B cell (primary cell): ENCODE measurements at regions of chr18 and their contacts with region 1.

Region 1: GRCh38 chr18:32092422-32093101 is 888 bp downstream of the RNF138 start:
- DNase-seq: peak; percentile 98
- ATAC-seq: peak; percentile 90
- H3K4me3 ChIP-seq: peak overlapping the region; percentile 63 to 98 (median 90)
- H3K4me3 Mint-ChIP-seq: peak overlapping the region; percentile 93
- H3K27ac ChIP-seq: peak overlapping the region; percentile 100
- H3K27ac Mint-ChIP-seq: peak overlapping the region; percentile 98
- H3K4me1 ChIP-seq: peaks cover 35 to 40% of the 10 kb centered on the region in 2 donors
- H3K4me1 Mint-ChIP-seq: peaks cover 43% of the 10 kb centered on the region
- H3K27me3 ChIP-seq: no peaks in the 10 kb centered on the region
- H3K27me3 Mint-ChIP-seq: no peaks in the 10 kb centered on the region
- CTCF ChIP-seq: no peak

Region 2: GRCh38 chr18:31819106-31819924 is 273.2 kb before region 1 on chr18:
- CTCF ChIA-PET with region 1: no interaction called
- POLR2A ChIA-PET with region 1: no interaction called
- intact Hi-C with region 1: no loop called
- DNase-seq: peak; percentile 42
- ATAC-seq: no peak
- H3K4me3 ChIP-seq: no peak overlapping the region
- H3K4me3 Mint-ChIP-seq: no peak overlapping the region
- H3K27ac ChIP-seq: no peak overlapping the region
- H3K27ac Mint-ChIP-seq: no peak overlapping the region
- H3K4me1 ChIP-seq: no peaks in the 10 kb centered on the region
- H3K4me1 Mint-ChIP-seq: no peaks in the 10 kb centered on the region
- H3K27me3 ChIP-seq: no peaks in the 10 kb centered on the region
- H3K27me3 Mint-ChIP-seq: peaks cover 6% of the 10 kb centered on the region
- CTCF ChIP-seq: peak; percentile 83

Region 3: DNA sequence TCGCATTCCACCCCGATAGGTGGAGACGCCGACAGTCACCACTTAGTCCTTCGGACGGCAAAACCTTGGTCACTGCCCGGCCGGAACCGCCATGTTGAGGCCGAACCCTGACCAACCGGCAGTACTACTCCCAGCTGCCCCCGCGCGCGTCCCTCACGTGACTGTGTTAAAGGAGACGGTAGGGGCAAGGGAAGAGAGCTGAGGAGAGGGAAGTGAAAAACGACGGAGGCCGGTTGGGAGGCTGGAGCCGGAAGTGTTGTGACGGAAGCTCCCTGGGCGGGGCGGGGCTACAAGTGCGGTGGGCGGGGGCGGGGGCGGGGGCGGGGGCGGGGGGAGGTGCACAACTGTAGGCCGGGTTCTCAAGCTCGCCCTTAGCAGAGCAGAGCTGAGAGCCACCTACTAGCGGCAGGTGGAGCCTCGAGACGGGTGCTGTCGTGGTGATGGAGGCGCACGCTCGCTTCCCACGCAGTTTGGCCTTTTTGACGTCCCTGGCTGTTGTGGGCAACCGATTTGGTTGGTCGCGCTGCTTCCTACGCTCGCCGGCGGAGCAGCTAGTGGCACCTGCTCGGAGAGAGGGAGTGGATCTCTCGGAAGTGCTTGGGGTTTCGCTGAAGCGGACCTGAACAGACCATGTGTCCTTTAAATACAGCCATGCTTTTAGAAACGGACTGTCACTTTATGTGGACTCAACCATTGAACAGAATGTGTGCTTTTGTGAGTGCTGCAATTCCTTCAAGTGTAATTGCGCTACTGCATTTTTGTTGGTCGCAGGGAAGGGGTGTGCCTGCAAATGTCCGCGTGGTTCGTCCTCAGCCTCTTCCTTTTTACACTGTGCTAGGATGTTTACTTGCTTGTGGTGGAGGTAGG is 149.3 kb before region 1 on chr18 and contains the start of gene TRAPPC8:
- CTCF ChIA-PET with region 1: interaction called, 4 read pairs
- POLR2A ChIA-PET with region 1: interaction called, 42 read pairs
- intact Hi-C with region 1: loop called (anchors 1 kb)
- DNase-seq: peak; percentile 98
- ATAC-seq: peak; percentile 80
- H3K4me3 ChIP-seq: peak within 1 kb of the TSS; percentile 83 to 97 (median 94)
- H3K4me3 Mint-ChIP-seq: peak within 1 kb of the TSS; percentile 100
- H3K27ac ChIP-seq: peak within 1 kb of the TSS; percentile 98
- H3K27ac Mint-ChIP-seq: peak within 1 kb of the TSS; percentile 100
- H3K4me1 ChIP-seq: peaks cover 24 to 31% of the 10 kb centered on the region in 2 donors
- H3K4me1 Mint-ChIP-seq: peaks cover 39% of the 10 kb centered on the region
- H3K27me3 ChIP-seq: no peaks in the 10 kb centered on the region
- H3K27me3 Mint-ChIP-seq: no peaks in the 10 kb centered on the region
- CTCF ChIP-seq: no peak
- total RNA-seq, gene TRAPPC8: 89.8 and 95.5 TPM in 2 replicates

Region 4: DNA sequence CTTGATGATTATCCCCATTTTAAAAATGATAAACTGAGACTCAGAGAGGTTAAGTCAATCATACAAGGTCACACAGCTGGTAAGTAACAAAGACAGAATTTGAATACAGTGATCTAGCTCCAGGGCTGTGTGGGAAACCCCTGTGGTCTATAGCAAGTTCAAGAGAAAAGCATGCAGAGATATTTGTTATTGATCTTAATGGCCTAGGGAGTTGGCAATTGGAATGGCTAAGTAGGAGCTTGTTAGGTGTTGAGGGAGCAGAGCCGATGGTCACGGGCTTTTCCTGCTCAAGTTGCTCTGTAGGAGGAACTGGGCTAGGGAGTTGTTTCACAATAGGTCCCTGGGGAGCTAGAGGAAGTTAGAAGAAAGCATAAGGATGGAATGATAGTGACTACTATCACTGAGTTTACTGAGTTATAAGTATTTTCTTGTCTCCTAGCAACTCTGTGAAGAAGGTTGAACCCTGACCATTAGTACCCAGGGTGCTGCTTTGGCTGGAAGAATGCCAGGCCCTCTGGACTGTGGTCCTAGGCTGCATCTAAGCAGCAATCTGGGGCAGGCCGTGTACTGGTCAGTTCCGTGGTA is 44.0 kb before region 1 on chr18:
- CTCF ChIA-PET with region 1: no interaction called
- POLR2A ChIA-PET with region 1: no interaction called
- intact Hi-C with region 1: loop called (anchors 5 kb)
- DNase-seq: peak; percentile 53
- ATAC-seq: peak; percentile 33
- H3K4me3 ChIP-seq: no peak overlapping the region
- H3K4me3 Mint-ChIP-seq: peak overlapping the region; percentile 27
- H3K27ac ChIP-seq: peak overlapping the region; percentile 77 to 81
- H3K27ac Mint-ChIP-seq: peak overlapping the region; percentile 71
- H3K4me1 ChIP-seq: peaks cover 19% of the 10 kb centered on the region in 2 donors
- H3K4me1 Mint-ChIP-seq: peaks cover 25% of the 10 kb centered on the region
- H3K27me3 ChIP-seq: no peaks in the 10 kb centered on the region
- H3K27me3 Mint-ChIP-seq: no peaks in the 10 kb centered on the region
- CTCF ChIP-seq: no peak

Region 5: GRCh38 chr18:32081881-32082280 is 10.7 kb before region 1 on chr18:
- CTCF ChIA-PET with region 1: no interaction called
- POLR2A ChIA-PET with region 1: no interaction called
- intact Hi-C with region 1: no loop called
- DNase-seq: no peak
- ATAC-seq: no peak
- H3K4me3 ChIP-seq: no peak overlapping the region
- H3K4me3 Mint-ChIP-seq: no peak overlapping the region
- H3K27ac ChIP-seq: no peak overlapping the region
- H3K27ac Mint-ChIP-seq: no peak overlapping the region
- H3K4me1 ChIP-seq: peaks cover 11 to 25% of the 10 kb centered on the region in 2 donors
- H3K4me1 Mint-ChIP-seq: peaks cover 16% of the 10 kb centered on the region
- H3K27me3 ChIP-seq: no peaks in the 10 kb centered on the region
- H3K27me3 Mint-ChIP-seq: no peaks in the 10 kb centered on the region
- CTCF ChIP-seq: no peak